Activated CD4-positive, alpha-beta memory T cell treated with anti-CD3 and anti-CD28 coated beads for 36 hours (primary cell): ENCODE measurements at regions of chr10 and their contacts with region 1.

Region 1: GRCh38 chr10:114526504-114527238 is 122.4 kb upstream of the AFAP1L2 start:
- DNase-seq: peak; percentile 94
- H3K4me3 Mint-ChIP-seq: peak overlapping the region; percentile 93
- H3K27ac Mint-ChIP-seq: peak overlapping the region; percentile 95
- H3K4me1 Mint-ChIP-seq: peaks cover 43% of the 10 kb centered on the region
- H3K27me3 Mint-ChIP-seq: no peaks in the 10 kb centered on the region

Region 2: GRCh38 chr10:114173921-114174694 is 352.6 kb before region 1 on chr10 and contains the start of gene CCDC186:
- CTCF ChIA-PET with region 1: no interaction called
- POLR2A ChIA-PET with region 1: interaction called, 3 read pairs
- intact Hi-C with region 1: loop called (anchors 1 kb)
- DNase-seq: peak; percentile 99
- H3K4me3 Mint-ChIP-seq: peak within 1 kb of the TSS; percentile 93
- H3K27ac Mint-ChIP-seq: peak within 1 kb of the TSS; percentile 91
- H3K4me1 Mint-ChIP-seq: peaks cover 33% of the 10 kb centered on the region
- H3K27me3 Mint-ChIP-seq: no peaks in the 10 kb centered on the region
- total RNA-seq, gene CCDC186: 12.6 to 13.8 TPM

Region 3: DNA sequence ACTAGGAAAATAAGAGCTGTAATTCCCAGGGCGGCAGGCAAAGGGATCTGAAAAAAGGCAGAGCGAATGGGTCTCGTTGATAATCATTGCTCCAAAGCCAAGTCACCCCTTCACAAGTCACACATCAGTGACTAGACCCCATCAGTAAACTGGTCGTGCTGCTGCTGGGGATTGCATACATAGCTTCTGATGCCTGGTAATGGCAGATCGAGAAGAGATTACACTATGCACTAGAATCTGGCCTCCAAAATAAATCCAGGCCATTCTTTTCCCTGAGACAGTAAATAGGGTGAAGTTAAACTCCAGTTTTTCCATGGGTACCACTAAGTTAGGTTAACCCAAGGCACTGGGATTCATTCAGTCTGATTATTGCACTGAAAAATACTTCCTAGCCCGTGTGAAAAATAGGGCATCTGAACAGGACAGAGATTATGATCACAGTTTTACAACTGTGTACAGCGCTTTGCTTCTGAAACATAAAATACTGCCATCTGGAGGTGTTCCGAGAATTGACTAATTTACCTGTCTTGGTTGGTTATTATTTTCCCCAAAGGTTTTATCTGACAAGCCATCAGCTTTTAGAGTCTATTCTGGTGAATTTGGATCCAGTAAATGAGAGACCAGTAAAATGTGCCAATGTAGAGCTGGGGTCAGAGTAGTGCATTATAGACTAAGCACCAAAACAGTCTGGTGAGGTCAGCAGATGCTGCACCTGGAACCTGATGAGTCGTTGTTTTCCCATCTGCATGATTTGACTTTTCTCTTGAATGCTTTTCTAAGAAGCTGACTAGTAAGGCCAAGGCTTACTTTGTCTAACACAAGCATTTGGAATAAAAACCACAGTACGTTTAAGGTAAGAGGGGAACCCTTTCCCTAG is 39.5 kb before region 1 on chr10:
- CTCF ChIA-PET with region 1: interaction called, 25 read pairs
- POLR2A ChIA-PET with region 1: interaction called, 17 read pairs
- intact Hi-C with region 1: loop called (anchors 1 kb)
- DNase-seq: peak; percentile 63
- H3K4me3 Mint-ChIP-seq: no peak overlapping the region
- H3K27ac Mint-ChIP-seq: peak overlapping the region; percentile 85
- H3K4me1 Mint-ChIP-seq: peaks cover 53% of the 10 kb centered on the region
- H3K27me3 Mint-ChIP-seq: no peaks in the 10 kb centered on the region

Region 4: GRCh38 chr10:114492351-114493037 is 34.2 kb before region 1 on chr10:
- CTCF ChIA-PET with region 1: interaction called, 25 read pairs
- POLR2A ChIA-PET with region 1: interaction called, 17 read pairs
- intact Hi-C with region 1: loop called (anchors 1 kb)
- DNase-seq: peak; percentile 55
- H3K4me3 Mint-ChIP-seq: peak overlapping the region; percentile 10
- H3K27ac Mint-ChIP-seq: peak overlapping the region; percentile 84
- H3K4me1 Mint-ChIP-seq: peaks cover 77% of the 10 kb centered on the region
- H3K27me3 Mint-ChIP-seq: no peaks in the 10 kb centered on the region

Region 5: GRCh38 chr10:114499630-114500190 is 27.0 kb before region 1 on chr10:
- CTCF ChIA-PET with region 1: interaction called, 7 read pairs
- POLR2A ChIA-PET with region 1: interaction called, 47 read pairs
- intact Hi-C with region 1: loop called (anchors 1 kb)
- DNase-seq: peak; percentile 92
- H3K4me3 Mint-ChIP-seq: peak overlapping the region; percentile 63
- H3K27ac Mint-ChIP-seq: peak overlapping the region; percentile 89
- H3K4me1 Mint-ChIP-seq: peaks cover 89% of the 10 kb centered on the region
- H3K27me3 Mint-ChIP-seq: no peaks in the 10 kb centered on the region

Region 6: DNA sequence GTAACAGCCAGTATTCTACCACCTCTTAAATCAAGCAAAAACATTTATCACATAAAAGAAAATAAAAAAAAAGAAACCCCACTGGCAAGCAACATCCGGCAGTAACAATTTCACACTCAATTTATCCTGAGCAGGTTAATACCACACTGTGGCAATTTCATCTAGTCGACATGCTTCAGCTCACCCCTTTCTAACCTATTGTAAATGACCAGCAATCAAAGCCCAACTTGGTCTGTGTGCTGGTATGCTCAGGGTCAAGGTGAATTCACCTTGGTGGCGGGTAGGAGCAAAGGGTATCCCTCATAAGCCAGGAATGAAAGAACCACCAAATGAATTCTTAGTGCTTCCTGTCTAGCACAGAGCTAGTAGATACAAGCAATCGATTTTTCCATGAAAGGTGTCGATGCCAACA is 13.3 kb before region 1 on chr10:
- CTCF ChIA-PET with region 1: interaction called, 8 read pairs
- POLR2A ChIA-PET with region 1: interaction called, 13 read pairs
- intact Hi-C with region 1: loop called (anchors 1 kb)
- DNase-seq: no peak
- H3K4me3 Mint-ChIP-seq: peak overlapping the region; percentile 45
- H3K27ac Mint-ChIP-seq: peak overlapping the region; percentile 42
- H3K4me1 Mint-ChIP-seq: peaks cover 78% of the 10 kb centered on the region
- H3K27me3 Mint-ChIP-seq: no peaks in the 10 kb centered on the region

Region 7: DNA sequence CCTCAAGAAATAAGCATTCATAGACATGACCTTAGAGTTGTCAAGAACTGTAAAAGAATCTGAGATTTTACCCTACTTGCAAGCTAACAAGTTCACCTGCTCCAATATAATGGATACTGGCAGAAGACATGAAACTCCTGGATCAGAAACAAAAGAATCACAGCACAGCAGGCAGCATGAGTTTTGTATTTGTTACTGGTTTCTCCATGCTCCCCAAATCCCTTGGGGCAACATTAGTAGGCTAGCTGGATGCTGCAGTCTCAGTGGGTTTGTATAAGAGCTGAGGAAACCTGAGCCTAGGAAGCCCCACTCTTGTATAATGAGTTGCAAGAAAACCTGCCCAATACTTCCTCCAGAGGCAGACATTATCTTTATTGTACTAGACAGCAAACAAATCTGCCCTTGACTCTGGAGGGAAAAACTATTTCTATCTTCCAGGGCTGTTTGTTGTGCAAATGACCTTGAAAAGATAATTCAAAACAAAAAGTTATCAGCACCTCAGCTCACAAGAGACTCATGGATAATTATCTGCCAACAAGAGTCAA is 66.6 kb after region 1 on chr10:
- CTCF ChIA-PET with region 1: no interaction called
- POLR2A ChIA-PET with region 1: no interaction called
- intact Hi-C with region 1: no loop called
- DNase-seq: no peak
- H3K4me3 Mint-ChIP-seq: no peak overlapping the region
- H3K27ac Mint-ChIP-seq: no peak overlapping the region
- H3K4me1 Mint-ChIP-seq: peaks cover 3% of the 10 kb centered on the region
- H3K27me3 Mint-ChIP-seq: peaks cover 1% of the 10 kb centered on the region